ENCODE measurements at regions of chr3 and their contacts with region 1.

Region 1: GRCh38 chr3:100089812-100090668 is 24.3 kb downstream of the FILIP1L start:
- DNase-seq: no peak
- H3K4me3 Mint-ChIP-seq: peak overlapping the region; percentile 0
- H3K27ac Mint-ChIP-seq: peak overlapping the region; percentile 60
- H3K4me1 Mint-ChIP-seq: peaks cover 49% of the 10 kb centered on the region
- H3K27me3 Mint-ChIP-seq: peaks cover 3% of the 10 kb centered on the region

Region 2: GRCh38 chr3:99866261-99866761 is 223.7 kb before region 1 on chr3:
- intact Hi-C with region 1: loop called (anchors 1 kb)
- DNase-seq: peak; percentile 30
- H3K4me3 Mint-ChIP-seq: peak overlapping the region; percentile 70
- H3K27ac Mint-ChIP-seq: peak overlapping the region; percentile 92
- H3K4me1 Mint-ChIP-seq: peaks cover 95% of the 10 kb centered on the region
- H3K27me3 Mint-ChIP-seq: no peaks in the 10 kb centered on the region

Region 3: DNA sequence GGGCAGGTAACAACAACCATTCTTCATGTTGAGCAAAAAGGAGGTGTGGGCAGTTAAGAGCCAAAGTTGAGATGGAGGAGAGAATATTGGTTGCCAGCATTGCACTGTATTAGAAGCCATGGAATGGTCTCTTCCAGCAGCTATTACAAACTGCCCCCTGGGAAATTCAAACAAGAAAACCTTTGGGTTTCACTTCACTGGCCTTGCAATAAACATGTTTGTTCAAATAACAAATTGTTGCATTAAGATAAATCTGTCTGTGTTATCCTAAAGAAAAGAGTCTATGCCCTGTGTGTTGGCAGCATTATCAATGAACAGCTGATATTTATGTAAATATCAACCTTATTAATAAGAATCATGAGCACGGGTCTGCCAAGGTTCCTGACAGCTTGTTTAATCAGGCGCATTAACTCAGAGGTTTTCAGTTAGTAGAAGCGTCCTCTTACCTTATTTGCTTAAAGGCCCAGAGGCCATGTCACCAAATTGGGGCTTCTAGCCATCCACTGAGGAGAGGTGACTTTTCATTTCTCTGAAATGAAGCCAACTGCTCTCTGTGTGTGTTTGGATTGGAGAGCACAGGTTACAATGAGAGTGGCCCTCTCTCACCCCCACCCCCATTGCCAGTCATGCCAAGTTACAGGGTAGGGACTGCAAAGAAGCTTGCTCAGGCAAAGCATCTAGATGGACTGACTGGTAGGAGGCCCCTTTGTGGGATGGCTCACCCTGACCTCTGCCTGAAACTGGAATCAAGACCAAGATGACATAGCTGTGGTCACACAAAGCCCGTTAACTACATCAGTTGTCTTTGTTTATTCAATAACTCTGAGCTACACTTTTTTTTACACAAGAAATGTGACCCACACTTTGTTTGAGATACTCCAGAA is 13.8 kb after region 1 on chr3:
- intact Hi-C with region 1: loop called (anchors 2 kb)
- DNase-seq: no peak
- H3K4me3 Mint-ChIP-seq: no peak overlapping the region
- H3K27ac Mint-ChIP-seq: no peak overlapping the region
- H3K4me1 Mint-ChIP-seq: peaks cover 24% of the 10 kb centered on the region
- H3K27me3 Mint-ChIP-seq: no peaks in the 10 kb centered on the region

Region 4: GRCh38 chr3:100216713-100217112 is 126.7 kb after region 1 on chr3:
- intact Hi-C with region 1: no loop called
- DNase-seq: no peak
- H3K4me3 Mint-ChIP-seq: no peak overlapping the region
- H3K27ac Mint-ChIP-seq: no peak overlapping the region
- H3K4me1 Mint-ChIP-seq: peaks cover 6% of the 10 kb centered on the region
- H3K27me3 Mint-ChIP-seq: peaks cover 26% of the 10 kb centered on the region

Region 5: DNA sequence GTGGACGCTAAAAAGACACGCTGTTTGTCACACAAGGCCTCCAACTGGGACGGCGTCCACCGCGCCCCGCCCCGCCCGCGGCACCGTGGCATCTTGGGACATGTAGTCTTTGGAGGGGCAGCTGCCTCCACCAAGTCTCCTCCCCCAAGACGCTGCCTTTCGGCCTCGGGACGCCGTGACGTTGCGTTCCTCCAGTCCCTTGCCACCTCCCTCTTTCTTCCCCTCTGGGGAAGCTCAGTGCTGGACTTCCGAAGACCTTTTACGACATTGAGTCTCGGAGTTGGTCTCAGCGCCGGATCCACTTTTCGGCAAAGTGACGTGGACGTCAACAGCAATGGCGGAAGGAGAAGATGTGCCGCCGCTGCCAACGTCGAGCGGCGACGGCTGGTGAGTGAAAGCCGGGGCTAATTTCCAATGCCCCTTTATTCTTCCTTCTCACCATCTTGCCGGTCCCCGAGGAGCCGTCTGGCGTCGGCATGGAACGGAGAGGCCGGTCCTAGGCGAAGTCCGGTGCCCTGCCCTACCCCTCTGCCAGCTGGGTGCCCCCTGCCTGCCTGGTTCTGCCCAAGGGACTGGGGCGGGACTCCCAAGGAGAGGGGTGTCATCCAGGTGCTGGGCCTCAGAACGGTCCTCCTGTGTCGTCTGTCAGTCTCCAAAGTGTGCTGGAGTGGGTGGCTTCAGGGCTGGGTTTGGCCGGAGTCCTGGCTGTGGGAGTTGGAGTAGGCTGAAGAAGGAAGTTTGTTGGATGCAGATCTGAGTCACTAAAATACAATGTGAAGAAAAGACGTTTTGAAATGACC is 170.8 kb after region 1 on chr3 and contains the start of gene TBC1D23:
- intact Hi-C with region 1: loop called (anchors 1 kb)
- DNase-seq: peak; percentile 97
- H3K4me3 Mint-ChIP-seq: peak within 1 kb of the TSS; percentile 92
- H3K27ac Mint-ChIP-seq: peak within 1 kb of the TSS; percentile 97
- H3K4me1 Mint-ChIP-seq: peaks cover 38% of the 10 kb centered on the region
- H3K27me3 Mint-ChIP-seq: no peaks in the 10 kb centered on the region
- total RNA-seq, gene TBC1D23: 18.3 and 19.0 TPM in 2 replicates

Measured in activated T-helper 1 cell treated with anti-CD3 and anti-CD28 coated beads, Interleukin-12 subunit alpha, Interleukin-12 subunit beta, Interleukin-2, Interleukin-4 antibody, amounts not matched to agents 30 ng/mL and 10 ng/mL and 1 ng/mL, durations not matched to agents 14 hours and 24 hours and 36 hours (primary cell).